GM12878 (cell line): ENCODE measurements at regions of chr17 and their contacts with region 1.

Region 1: GRCh38 chr17:76000016-76000754 is 470 bp upstream of the CDK3 start:
- DNase-seq: no peak
- ATAC-seq: peak; percentile 74
- H3K4me3 ChIP-seq: no peak overlapping the region
- H3K27ac ChIP-seq: no peak overlapping the region
- H3K4me1 ChIP-seq: peaks cover 16% of the 10 kb centered on the region
- H3K27me3 ChIP-seq: no peaks in the 10 kb centered on the region
- CTCF ChIP-seq: peak; percentile 67 to 87 (median 72)
- EP300 ChIP-seq: no peak
- POLR2A ChIP-seq: no peak
- RAD21 ChIP-seq: peak; percentile 54

Region 2: GRCh38 chr17:75814900-75815373 is 185.2 kb before region 1 on chr17:
- CTCF ChIA-PET with region 1: no interaction called
- POLR2A ChIA-PET with region 1: no interaction called
- RAD21 ChIA-PET with region 1: no interaction called
- SMC1A ChIA-PET with region 1: no interaction called
- in situ Hi-C with region 1: no loop called
- intact Hi-C with region 1: no loop called
- DNase-seq: no peak
- ATAC-seq: no peak
- H3K4me3 ChIP-seq: no peak overlapping the region
- H3K27ac ChIP-seq: no peak overlapping the region
- H3K4me1 ChIP-seq: no peaks in the 10 kb centered on the region
- H3K27me3 ChIP-seq: no peaks in the 10 kb centered on the region
- CTCF ChIP-seq: no peak
- EP300 ChIP-seq: no peak
- POLR2A ChIP-seq: peak; percentile 24; the same call in 1 of the 2 replicates
- RAD21 ChIP-seq: no peak

Region 3: GRCh38 chr17:75843561-75844529 is 156.3 kb before region 1 on chr17 and contains the start of gene UNC13D:
- CTCF ChIA-PET with region 1: no interaction called
- POLR2A ChIA-PET with region 1: no interaction called
- RAD21 ChIA-PET with region 1: no interaction called
- SMC1A ChIA-PET with region 1: no interaction called
- in situ Hi-C with region 1: no loop called
- intact Hi-C with region 1: no loop called
- DNase-seq: no peak
- ATAC-seq: peak; percentile 62
- H3K4me3 ChIP-seq: peak within 1 kb of the TSS; percentile 77
- H3K27ac ChIP-seq: peak within 1 kb of the TSS; percentile 93
- H3K4me1 ChIP-seq: peaks cover 14% of the 10 kb centered on the region
- H3K27me3 ChIP-seq: no peaks in the 10 kb centered on the region
- CTCF ChIP-seq: no peak
- EP300 ChIP-seq: no peak
- POLR2A ChIP-seq: peak; percentile 82
- RAD21 ChIP-seq: no peak
- polyA plus RNA-seq, gene UNC13D: 0.32 to 1.6 TPM

Region 4: DNA sequence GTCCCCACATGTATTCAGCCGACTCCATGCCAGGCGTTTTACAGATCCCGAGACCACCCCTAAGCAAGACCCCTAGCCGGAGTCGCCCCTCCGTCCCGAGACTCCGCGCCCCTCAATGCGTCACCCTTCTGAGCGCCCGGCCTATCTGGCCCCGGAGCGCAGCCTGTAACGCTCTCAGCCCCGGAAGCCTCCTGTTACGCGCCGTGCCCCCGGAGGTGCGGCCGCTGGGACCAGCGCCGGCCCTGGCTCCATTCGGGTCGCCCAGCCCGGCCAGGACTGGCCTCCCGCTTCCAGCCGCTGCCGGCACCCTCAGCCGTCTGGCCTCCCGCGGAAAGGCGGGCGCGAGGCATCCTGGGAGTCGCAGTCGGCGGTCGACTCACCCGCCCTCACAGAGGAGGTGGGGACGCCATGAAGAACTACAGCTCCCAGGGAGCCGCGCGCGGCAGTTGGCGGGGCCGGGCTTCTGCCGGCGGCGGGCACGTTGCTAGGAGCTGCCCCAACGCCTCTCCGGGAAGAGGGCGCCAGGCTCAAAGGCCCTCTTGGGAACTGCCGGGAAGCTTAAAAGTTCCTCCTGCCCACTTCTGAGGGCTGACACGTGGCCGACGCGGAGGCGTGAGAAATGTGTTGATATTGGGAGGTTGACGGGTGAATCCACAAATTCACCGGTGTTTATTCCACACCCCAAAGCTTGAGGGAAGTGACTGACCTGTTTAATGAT is 59.3 kb before region 1 on chr17 and contains the start of gene FBF1:
- CTCF ChIA-PET with region 1: no interaction called
- POLR2A ChIA-PET with region 1: interaction called, 3 read pairs
- RAD21 ChIA-PET with region 1: interaction called, 8 read pairs
- SMC1A ChIA-PET with region 1: interaction called, 4 read pairs
- in situ Hi-C with region 1: no loop called
- intact Hi-C with region 1: loop called (anchors 5 kb)
- DNase-seq: peak; percentile 46
- ATAC-seq: peak; percentile 100
- H3K4me3 ChIP-seq: peak within 1 kb of the TSS; percentile 85
- H3K27ac ChIP-seq: peak within 1 kb of the TSS; percentile 65
- H3K4me1 ChIP-seq: no peaks in the 10 kb centered on the region
- H3K27me3 ChIP-seq: no peaks in the 10 kb centered on the region
- CTCF ChIP-seq: no peak
- EP300 ChIP-seq: no peak
- POLR2A ChIP-seq: peak; percentile 94
- RAD21 ChIP-seq: no peak
- polyA plus RNA-seq, gene FBF1: 0.29 to 0.35 TPM

Region 5: GRCh38 chr17:75978938-75979704 is 21.1 kb before region 1 on chr17 and contains the starts of genes ACOX1 and TEN1:
- CTCF ChIA-PET with region 1: interaction called, 14 read pairs
- POLR2A ChIA-PET with region 1: interaction called, 24 read pairs
- RAD21 ChIA-PET with region 1: interaction called, 11 read pairs
- SMC1A ChIA-PET with region 1: interaction called, 10 read pairs
- in situ Hi-C with region 1: no loop called
- intact Hi-C with region 1: no loop called
- DNase-seq: peak; percentile 80
- ATAC-seq: peak; percentile 98
- H3K4me3 ChIP-seq: peak within 1 kb of the TSS; percentile 87
- H3K27ac ChIP-seq: peak within 1 kb of the TSS; percentile 99
- H3K4me1 ChIP-seq: peaks cover 6% of the 10 kb centered on the region
- H3K27me3 ChIP-seq: no peaks in the 10 kb centered on the region
- CTCF ChIP-seq: peak; percentile 7 to 32 (median 13); a peak in 3 of 6 replicates
- EP300 ChIP-seq: peak in 1 of 2 experiments; percentile 33; a peak in 1 of 4 replicates
- POLR2A ChIP-seq: peak; percentile 83
- RAD21 ChIP-seq: no peak
- polyA plus RNA-seq, gene ACOX1: 6.5 to 12.3 TPM
- polyA plus RNA-seq, gene TEN1: 1.1 to 5.4 TPM

Region 6: DNA sequence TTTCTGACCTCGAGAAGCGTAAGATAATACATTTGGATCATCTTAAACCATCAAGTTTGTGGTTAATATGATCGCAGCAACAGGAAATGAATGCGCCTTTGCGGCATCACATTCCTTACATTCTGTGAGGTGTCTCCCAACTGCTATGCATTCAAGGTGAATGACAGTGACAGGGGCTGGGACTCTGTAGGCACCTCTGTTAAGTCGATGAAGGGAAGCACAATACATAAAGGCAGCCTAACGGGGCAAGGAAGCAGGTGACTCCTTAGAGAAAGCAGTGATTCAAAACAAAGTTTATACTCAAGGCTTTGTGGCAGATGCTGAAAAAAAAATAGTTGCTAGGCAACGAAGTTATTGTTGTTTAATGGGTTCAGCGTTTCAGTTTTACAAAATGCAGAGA is 48.5 kb after region 1 on chr17:
- CTCF ChIA-PET with region 1: no interaction called
- POLR2A ChIA-PET with region 1: no interaction called
- RAD21 ChIA-PET with region 1: no interaction called
- SMC1A ChIA-PET with region 1: no interaction called
- in situ Hi-C with region 1: no loop called
- intact Hi-C with region 1: no loop called
- DNase-seq: no peak
- ATAC-seq: no peak
- H3K4me3 ChIP-seq: no peak overlapping the region
- H3K27ac ChIP-seq: 0 out of 2 replicates have a peak overlapping the region, but pooled peaks have one; percentile 25
- H3K4me1 ChIP-seq: peaks cover 11% of the 10 kb centered on the region
- H3K27me3 ChIP-seq: no peaks in the 10 kb centered on the region
- CTCF ChIP-seq: no peak
- EP300 ChIP-seq: no peak
- POLR2A ChIP-seq: no peak
- RAD21 ChIP-seq: no peak